ENCODE measurements at regions of chr11 and their contacts with region 1.

Region 1: GRCh38 chr11:30196400-30197206 is 34.2 kb upstream of the FSHB start:
- DNase-seq: peak; percentile 68
- ATAC-seq: peak; percentile 68
- H3K4me3 Mint-ChIP-seq: no peak overlapping the region
- H3K27ac Mint-ChIP-seq: no peak overlapping the region
- H3K4me1 Mint-ChIP-seq: no peaks in the 10 kb centered on the region
- H3K27me3 Mint-ChIP-seq: peaks cover 14% of the 10 kb centered on the region
- CTCF ChIP-seq: peak; percentile 63

Region 2: GRCh38 chr11:29432719-29433325 is 763.8 kb before region 1 on chr11:
- CTCF ChIA-PET with region 1: interaction called, 10 read pairs
- POLR2A ChIA-PET with region 1: no interaction called
- intact Hi-C with region 1: no loop called
- DNase-seq: no peak
- ATAC-seq: no peak
- H3K4me3 Mint-ChIP-seq: no peak overlapping the region
- H3K27ac Mint-ChIP-seq: no peak overlapping the region
- H3K4me1 Mint-ChIP-seq: no peaks in the 10 kb centered on the region
- H3K27me3 Mint-ChIP-seq: no peaks in the 10 kb centered on the region
- CTCF ChIP-seq: peak; percentile 49

Region 3: DNA sequence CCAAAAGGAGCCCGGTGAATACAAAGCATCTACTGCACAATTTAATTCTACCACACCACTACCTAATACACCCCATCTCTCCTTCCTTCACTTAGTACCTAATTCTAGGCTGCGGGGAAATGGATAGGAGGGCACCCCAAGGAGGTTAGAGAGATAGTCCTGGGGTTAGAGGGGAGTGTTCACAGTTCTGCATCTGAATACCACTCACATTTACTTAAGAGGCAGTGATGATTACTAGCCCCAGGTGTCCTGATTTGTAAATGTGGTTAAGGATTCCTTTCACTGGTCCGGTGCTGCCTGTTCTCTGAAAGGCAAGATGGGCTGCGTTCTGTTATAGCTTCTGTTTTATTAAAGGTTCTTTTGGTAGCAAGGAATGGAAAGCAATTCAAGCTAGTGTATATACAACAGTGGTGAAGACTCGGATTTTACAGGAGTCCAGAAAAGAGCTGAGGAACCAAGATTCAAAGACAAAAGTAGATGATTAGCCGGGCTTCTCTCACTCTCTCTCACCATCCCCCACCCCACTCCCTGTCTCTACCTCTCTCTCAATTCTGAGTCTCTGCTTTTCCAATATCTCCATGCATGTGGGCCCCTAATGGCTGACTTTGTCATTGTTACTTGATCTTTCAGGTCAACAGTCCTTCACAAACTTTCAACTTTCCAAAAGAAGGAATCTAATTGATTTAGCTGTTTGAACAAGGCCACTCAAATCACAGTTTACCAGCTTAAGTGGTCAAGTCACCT is 171.0 kb before region 1 on chr11:
- CTCF ChIA-PET with region 1: no interaction called
- POLR2A ChIA-PET with region 1: no interaction called
- intact Hi-C with region 1: no loop called
- DNase-seq: no peak
- ATAC-seq: no peak
- H3K4me3 Mint-ChIP-seq: no peak overlapping the region
- H3K27ac Mint-ChIP-seq: no peak overlapping the region
- H3K4me1 Mint-ChIP-seq: no peaks in the 10 kb centered on the region
- H3K27me3 Mint-ChIP-seq: peaks cover 8% of the 10 kb centered on the region
- CTCF ChIP-seq: no peak

Region 4: DNA sequence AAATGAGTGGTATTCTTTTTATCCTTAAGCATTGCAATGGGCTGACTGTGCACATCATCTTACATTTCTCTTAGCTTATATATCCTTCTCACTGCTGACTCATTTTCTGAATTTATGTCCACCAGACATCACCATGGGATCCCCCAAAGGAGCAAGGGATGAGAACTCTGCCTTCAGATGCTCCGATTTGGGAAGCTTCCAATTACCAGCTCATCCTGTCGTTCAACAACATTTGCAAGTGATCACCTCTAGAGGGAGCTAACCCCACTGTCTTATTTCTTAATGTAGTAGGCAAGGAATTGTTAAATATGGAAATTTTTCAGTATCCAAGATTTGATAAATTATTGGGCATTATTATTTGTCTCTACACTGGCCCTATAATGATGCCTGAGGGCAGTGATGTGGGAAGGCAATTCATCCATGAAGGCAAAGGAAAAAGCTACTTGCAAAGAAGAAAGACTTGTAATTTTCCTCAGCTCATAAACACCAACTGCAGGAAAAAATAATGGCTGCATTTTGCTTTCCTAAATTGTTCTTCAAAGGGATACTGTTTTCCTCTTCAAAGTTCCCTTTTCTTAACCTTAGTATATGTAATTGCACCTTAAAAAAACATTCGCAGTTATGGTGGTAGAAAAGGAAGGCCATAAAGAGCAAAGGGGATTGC is 68.2 kb before region 1 on chr11:
- CTCF ChIA-PET with region 1: interaction called, 12 read pairs
- POLR2A ChIA-PET with region 1: no interaction called
- intact Hi-C with region 1: no loop called
- DNase-seq: no peak
- ATAC-seq: no peak
- H3K4me3 Mint-ChIP-seq: no peak overlapping the region
- H3K27ac Mint-ChIP-seq: no peak overlapping the region
- H3K4me1 Mint-ChIP-seq: no peaks in the 10 kb centered on the region
- H3K27me3 Mint-ChIP-seq: no peaks in the 10 kb centered on the region
- CTCF ChIP-seq: peak; percentile 80

Region 5: GRCh38 chr11:30260813-30261212 is 64.2 kb after region 1 on chr11:
- CTCF ChIA-PET with region 1: no interaction called
- POLR2A ChIA-PET with region 1: no interaction called
- intact Hi-C with region 1: no loop called
- DNase-seq: no peak
- ATAC-seq: no peak
- H3K4me3 Mint-ChIP-seq: no peak overlapping the region
- H3K27ac Mint-ChIP-seq: no peak overlapping the region
- H3K4me1 Mint-ChIP-seq: no peaks in the 10 kb centered on the region
- H3K27me3 Mint-ChIP-seq: peaks cover 8% of the 10 kb centered on the region
- CTCF ChIP-seq: no peak

Region 6: GRCh38 chr11:30304620-30305019 is 108.0 kb after region 1 on chr11:
- CTCF ChIA-PET with region 1: no interaction called
- POLR2A ChIA-PET with region 1: no interaction called
- intact Hi-C with region 1: no loop called
- DNase-seq: no peak
- ATAC-seq: no peak
- H3K4me3 Mint-ChIP-seq: no peak overlapping the region
- H3K27ac Mint-ChIP-seq: no peak overlapping the region
- H3K4me1 Mint-ChIP-seq: no peaks in the 10 kb centered on the region
- H3K27me3 Mint-ChIP-seq: peaks cover 5% of the 10 kb centered on the region
- CTCF ChIP-seq: no peak

Measured in activated CD8-positive, alpha-beta T cell treated with anti-CD3 and anti-CD28 coated beads for 36 hours (primary cell).